Heart left ventricle (tissue), 16 donors: ENCODE measurements at regions of chr10 and their contacts with region 1.

Region 1: GRCh38 chr10:931416-932318 is at the start of gene LARP4B:
- DNase-seq: peak; percentile 97 to 99 (median 98)
- ATAC-seq: peak; percentile 99 to 100 (median 99)
- H3K4me3 ChIP-seq: peak within 1 kb of the TSS; percentile 43 to 96 (median 77)
- H3K27ac ChIP-seq: peak within 1 kb of the TSS; percentile 91 to 99 (median 96)
- H3K4me1 ChIP-seq: peaks cover 4 to 47% (median 35%) of the 10 kb centered on the region in 12 donors
- H3K27me3 ChIP-seq: no peaks in the 10 kb centered on the region
- CTCF ChIP-seq: no peak
- POLR2A ChIP-seq: peak in 1 of 2 donors; percentile 73
- total RNA-seq, gene LARP4B: 26.8 to 81.1 (median 64.8) TPM

Region 2: DNA sequence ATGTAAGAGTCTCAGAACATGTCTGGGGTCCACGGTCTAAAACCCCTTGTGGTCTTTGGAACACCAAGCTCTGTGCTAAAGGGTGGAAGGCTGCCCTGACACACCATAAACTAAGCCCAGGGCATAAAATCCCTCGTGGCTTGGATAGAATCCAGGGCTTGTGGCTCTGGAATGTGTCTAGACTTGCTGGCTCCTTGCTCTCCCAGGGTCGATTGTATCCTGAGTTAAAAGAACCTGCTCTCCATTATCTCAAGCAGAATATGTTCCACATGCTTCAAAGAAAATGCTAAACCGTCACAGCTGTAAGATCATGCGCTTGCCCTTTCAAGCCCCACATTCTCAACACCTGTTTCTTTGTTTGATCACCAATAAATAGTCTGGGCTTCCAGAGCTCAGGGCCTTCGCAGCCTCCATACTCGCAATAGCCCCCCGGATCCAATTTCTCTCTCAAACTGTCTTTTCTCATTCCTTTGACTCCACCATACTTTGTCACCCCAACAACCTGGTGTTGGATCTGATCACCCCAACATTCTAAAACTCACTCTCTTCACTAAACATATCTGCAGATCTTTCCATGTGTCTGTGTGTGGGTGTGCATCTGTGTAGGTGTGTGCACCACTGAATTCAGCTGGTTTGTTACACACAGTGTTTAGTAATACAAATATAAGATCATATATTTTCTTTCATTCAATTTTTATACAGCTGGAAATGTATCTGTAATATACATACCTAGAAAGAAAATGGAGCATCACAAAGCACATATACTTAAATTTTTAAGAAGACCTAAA is 558.0 kb before region 1 on chr10:
- intact Hi-C with region 1: no loop called
- DNase-seq: peak in 1 of 5 donors; percentile 36
- ATAC-seq: peak in 2 of 4 donors; percentile 15 to 22
- H3K4me3 ChIP-seq: no peak overlapping the region
- H3K27ac ChIP-seq: peak overlapping the region in 2 of 12 donors; percentile 27 to 43
- H3K4me1 ChIP-seq: peaks cover 0 to 30% (median 10%) of the 10 kb centered on the region in 12 donors
- H3K27me3 ChIP-seq: no peaks in the 10 kb centered on the region
- CTCF ChIP-seq: no peak
- POLR2A ChIP-seq: no peak

Region 3: GRCh38 chr10:689433-690371 is 242.0 kb before region 1 on chr10 and contains the start of gene DIP2C:
- intact Hi-C with region 1: loop called in 2 of 10 experiments (anchors 10 kb)
- DNase-seq: peak; percentile 77 to 88 (median 81)
- ATAC-seq: peak; percentile 79 to 90 (median 82)
- H3K4me3 ChIP-seq: peak within 1 kb of the TSS; percentile 67 to 98 (median 87)
- H3K27ac ChIP-seq: peak within 1 kb of the TSS; percentile 71 to 93 (median 88)
- H3K4me1 ChIP-seq: peaks cover 0 to 22% (median 13%) of the 10 kb centered on the region in 12 donors
- H3K27me3 ChIP-seq: peaks cover 0 to 12% (median 0%) of the 10 kb centered on the region in 9 donors
- CTCF ChIP-seq: no peak
- POLR2A ChIP-seq: peak in 1 of 2 donors; percentile 47
- total RNA-seq, gene DIP2C: 23.2 to 43.1 (median 30.3) TPM

Region 4: DNA sequence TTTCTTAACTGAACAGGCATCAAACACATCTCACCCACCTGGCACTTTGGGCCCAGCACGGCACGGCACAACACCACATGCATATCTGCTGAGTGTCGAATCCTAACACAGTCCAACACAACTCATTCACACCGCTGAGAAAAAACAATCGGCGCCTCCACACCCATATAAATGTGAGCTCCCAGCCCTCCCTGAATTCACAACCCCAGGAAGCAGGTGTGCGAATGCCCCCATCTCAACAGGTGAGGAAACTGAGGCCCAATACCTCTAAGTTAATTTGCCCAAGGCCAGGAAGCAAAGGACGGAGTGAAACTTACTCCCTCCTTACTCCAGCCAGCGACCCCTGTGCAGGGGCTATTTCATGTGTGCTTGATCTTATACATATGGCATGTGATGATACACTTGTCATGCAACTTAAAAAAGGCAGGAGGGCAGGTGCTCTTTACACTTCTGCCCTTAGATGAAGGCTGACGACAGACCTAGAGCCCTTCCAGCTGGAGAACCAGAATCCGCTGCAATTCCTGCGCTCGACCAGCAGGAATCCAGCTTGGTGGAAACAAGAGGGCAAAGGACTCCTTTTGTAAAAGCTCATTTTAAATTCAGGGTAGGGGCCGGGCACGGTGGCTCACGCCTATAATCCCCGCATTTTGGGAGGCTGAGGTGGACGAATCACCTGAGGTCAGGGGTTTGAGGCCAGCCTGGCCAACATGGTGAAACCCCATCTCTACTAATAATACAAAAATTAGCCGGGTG is 116.2 kb before region 1 on chr10:
- intact Hi-C with region 1: loop called in 2 of 10 experiments (anchors 5 to 10 kb)
- DNase-seq: no peak
- ATAC-seq: no peak
- H3K4me3 ChIP-seq: no peak overlapping the region
- H3K27ac ChIP-seq: no peak overlapping the region
- H3K4me1 ChIP-seq: peaks cover 0 to 34% (median 30%) of the 10 kb centered on the region in 12 donors
- H3K27me3 ChIP-seq: no peaks in the 10 kb centered on the region
- CTCF ChIP-seq: no peak
- POLR2A ChIP-seq: no peak

Region 5: GRCh38 chr10:870564-871166 is 61.0 kb before region 1 on chr10:
- intact Hi-C with region 1: loop called in 3 of 10 experiments (anchors 5 kb)
- DNase-seq: no peak
- ATAC-seq: no peak
- H3K4me3 ChIP-seq: no peak overlapping the region
- H3K27ac ChIP-seq: peak overlapping the region in 6 of 12 donors; percentile 3 to 81 (median 50)
- H3K4me1 ChIP-seq: peaks cover 0 to 69% (median 25%) of the 10 kb centered on the region in 12 donors
- H3K27me3 ChIP-seq: no peaks in the 10 kb centered on the region
- CTCF ChIP-seq: no peak
- POLR2A ChIP-seq: no peak

Region 6: DNA sequence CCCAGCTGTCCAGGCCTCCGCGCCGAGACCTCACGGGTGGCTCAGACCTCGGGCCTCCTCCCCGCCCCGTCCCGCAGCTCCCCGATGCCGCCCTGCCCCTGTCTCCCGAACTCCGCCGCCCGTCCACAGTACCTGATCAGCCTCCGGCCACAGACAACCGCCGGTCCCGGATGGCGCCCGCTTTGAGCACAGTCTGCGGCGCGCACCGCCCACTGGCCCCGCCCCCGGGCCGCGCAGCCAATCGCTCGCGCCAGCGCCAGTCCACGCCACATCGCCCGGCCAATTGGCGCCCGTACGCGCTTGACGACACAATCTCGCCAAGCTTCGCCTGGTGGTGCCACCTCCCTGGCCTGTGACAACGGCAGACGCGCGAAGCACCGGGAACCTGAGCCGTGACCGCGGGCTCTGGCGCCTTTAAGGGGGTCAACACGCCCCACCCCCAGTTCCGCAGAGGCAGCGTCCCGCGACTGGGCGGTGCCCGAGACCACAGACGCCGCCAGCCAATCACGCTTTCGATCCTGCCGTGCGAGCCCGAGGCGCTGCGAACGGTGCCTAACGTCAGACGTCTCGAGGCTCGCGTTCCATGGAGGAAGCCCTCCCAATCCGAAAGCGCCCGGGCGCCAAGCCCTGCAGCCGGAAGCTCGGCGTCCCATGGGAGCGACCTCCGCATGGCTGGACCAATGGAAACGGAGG is 117.2 kb after region 1 on chr10 and contains the start of gene IDI1:
- intact Hi-C with region 1: loop called in 3 of 10 experiments (anchors 2 to 5 kb)
- DNase-seq: peak; percentile 98 to 99 (median 99)
- ATAC-seq: peak; percentile 94 to 96 (median 95)
- H3K4me3 ChIP-seq: peak within 1 kb of the TSS; percentile 52 to 95 (median 82)
- H3K27ac ChIP-seq: peak within 1 kb of the TSS; percentile 95 to 100 (median 98)
- H3K4me1 ChIP-seq: peaks cover 6 to 55% (median 32%) of the 10 kb centered on the region in 12 donors
- H3K27me3 ChIP-seq: no peaks in the 10 kb centered on the region
- CTCF ChIP-seq: peak in 1 of 12 donors; percentile 13
- POLR2A ChIP-seq: peak; percentile 96 to 99
- total RNA-seq, gene IDI1: 13.7 to 29.8 (median 18.4) TPM